ENCODE measurements at regions of chr17 and their contacts with region 1.

Region 1: DNA sequence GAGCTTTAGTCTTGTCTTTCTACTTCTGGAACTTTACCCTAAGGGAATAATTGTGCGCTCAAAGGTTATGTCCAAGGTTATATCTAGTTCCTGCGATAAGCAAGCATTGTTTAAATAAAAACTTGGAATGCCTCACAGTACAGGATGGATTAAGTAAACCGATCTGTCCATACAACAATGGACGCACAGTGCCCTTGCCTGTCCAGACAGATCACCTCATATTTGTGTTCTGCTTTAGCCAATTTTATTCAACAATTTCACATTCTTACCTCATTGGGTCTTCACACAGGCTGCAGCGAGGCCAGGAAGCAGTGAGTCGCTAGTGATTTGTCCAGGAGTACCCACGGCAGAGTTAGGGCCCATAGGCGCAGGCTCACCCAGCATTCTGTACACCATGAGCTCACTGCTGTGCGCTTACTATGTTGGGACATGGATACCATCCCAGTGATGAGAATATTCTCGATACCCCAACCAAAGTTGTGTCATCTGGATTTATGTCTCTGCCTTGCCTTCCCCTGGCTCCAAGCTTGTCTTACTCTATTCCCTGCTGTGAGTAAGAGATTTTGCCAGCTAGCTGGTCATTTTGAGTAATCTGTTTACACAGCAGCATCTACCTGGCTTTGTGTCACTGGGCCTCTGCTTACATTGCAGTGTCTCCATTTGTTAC is 39.8 kb downstream of the USP43 start:
- DNase-seq: peak; percentile 89
- H3K4me3 ChIP-seq: no peak overlapping the region
- H3K27ac ChIP-seq: peak overlapping the region; percentile 78
- H3K4me1 ChIP-seq: peaks cover 15% of the 10 kb centered on the region
- H3K27me3 ChIP-seq: no peaks in the 10 kb centered on the region
- CTCF ChIP-seq: no peak

Region 2: GRCh38 chr17:8708025-8708461 is 977.0 kb before region 1 on chr17:
- CTCF ChIA-PET with region 1: no interaction called
- dilution Hi-C with region 1: no loop called
- in situ Hi-C with region 1: no loop called
- intact Hi-C with region 1: no loop called
- DNase-seq: no peak
- H3K4me3 ChIP-seq: no peak overlapping the region
- H3K27ac ChIP-seq: no peak overlapping the region
- H3K4me1 ChIP-seq: no peaks in the 10 kb centered on the region
- H3K27me3 ChIP-seq: no peaks in the 10 kb centered on the region
- CTCF ChIP-seq: no peak

Region 3: DNA sequence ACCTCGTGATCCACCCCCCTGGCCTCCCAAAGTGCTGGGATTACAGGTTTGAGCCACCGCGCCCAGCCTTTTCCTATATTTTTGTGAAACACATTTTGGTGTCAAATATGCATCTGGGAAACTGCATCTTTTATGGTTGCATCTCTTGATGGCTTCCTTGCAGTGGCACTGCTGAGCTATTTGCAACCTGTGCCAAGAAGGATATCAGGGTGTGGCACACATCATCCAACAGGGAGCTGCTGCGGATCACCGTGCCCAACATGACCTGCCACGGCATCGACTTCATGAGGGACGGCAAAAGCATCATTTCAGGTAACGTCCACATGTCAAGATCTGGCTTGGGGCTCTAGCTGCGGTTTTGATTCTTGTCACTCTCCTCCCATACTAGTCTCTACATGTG is 56.6 kb before region 1 on chr17:
- CTCF ChIA-PET with region 1: no interaction called
- dilution Hi-C with region 1: no loop called
- in situ Hi-C with region 1: no loop called
- intact Hi-C with region 1: loop called (anchors 10 kb)
- DNase-seq: peak; percentile 47
- H3K4me3 ChIP-seq: no peak overlapping the region
- H3K27ac ChIP-seq: no peak overlapping the region
- H3K4me1 ChIP-seq: no peaks in the 10 kb centered on the region
- H3K27me3 ChIP-seq: no peaks in the 10 kb centered on the region
- CTCF ChIP-seq: peak in 1 of 2 donors; percentile 50

Region 4: DNA sequence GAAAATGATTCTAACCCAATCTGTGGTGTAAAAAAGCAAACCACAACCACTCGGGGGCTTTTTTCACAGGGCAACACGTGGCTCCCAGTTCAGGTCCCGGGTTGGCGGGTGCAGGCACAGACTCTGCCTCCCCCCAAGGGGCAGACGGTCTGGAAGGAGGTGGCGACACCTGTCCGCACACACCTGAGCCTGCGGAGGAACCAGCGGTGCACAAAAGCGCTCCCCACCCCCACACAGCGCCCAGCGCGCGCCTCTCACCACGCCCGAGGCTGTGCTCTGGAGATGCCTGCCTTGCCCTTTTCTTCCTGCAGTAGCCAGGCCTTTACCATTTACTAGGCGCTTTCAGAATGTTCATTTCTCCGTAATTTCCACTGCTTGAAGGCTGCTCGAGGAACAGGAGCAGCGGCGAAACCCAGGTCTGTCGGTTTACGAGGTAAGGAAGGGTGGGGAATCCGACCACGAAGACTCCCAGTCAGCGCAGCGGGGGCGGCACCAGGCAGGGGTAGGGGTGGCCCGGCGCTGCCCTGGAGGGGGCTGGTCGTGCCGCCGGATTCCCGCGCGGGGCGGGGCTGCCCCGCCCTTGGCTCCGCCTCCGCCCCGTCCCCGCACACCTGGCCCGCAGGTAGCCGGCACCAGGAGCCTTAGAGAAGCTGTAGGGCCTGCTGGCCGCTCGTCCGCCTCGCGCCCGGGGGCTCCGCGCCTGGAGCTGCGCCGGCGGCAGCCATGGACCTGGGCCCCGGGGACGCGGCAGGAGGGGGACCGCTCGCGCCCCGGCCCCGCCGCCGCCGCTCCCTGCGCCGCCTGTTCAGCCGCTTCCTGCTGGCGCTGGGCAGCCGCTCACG is 40.0 kb before region 1 on chr17 and contains the start of gene USP43:
- CTCF ChIA-PET with region 1: no interaction called
- dilution Hi-C with region 1: loop called (anchors 5 kb)
- in situ Hi-C with region 1: no loop called
- intact Hi-C with region 1: loop called (anchors 2 kb)
- DNase-seq: peak; percentile 81
- H3K4me3 ChIP-seq: peak within 1 kb of the TSS; percentile 63 to 79 (median 69)
- H3K27ac ChIP-seq: peak within 1 kb of the TSS; percentile 88
- H3K4me1 ChIP-seq: peaks cover 25% of the 10 kb centered on the region
- H3K27me3 ChIP-seq: no peaks in the 10 kb centered on the region
- CTCF ChIP-seq: peak in 1 of 2 donors; percentile 13
- total RNA-seq, gene USP43: 8.0 to 9.3 TPM

Region 5: GRCh38 chr17:9702914-9703780 is 18.1 kb after region 1 on chr17:
- CTCF ChIA-PET with region 1: interaction called, 10 read pairs
- dilution Hi-C with region 1: no loop called
- in situ Hi-C with region 1: no loop called
- intact Hi-C with region 1: no loop called
- DNase-seq: no peak
- H3K4me3 ChIP-seq: no peak overlapping the region
- H3K27ac ChIP-seq: no peak overlapping the region
- H3K4me1 ChIP-seq: no peaks in the 10 kb centered on the region
- H3K27me3 ChIP-seq: no peaks in the 10 kb centered on the region
- CTCF ChIP-seq: no peak

Region 6: DNA sequence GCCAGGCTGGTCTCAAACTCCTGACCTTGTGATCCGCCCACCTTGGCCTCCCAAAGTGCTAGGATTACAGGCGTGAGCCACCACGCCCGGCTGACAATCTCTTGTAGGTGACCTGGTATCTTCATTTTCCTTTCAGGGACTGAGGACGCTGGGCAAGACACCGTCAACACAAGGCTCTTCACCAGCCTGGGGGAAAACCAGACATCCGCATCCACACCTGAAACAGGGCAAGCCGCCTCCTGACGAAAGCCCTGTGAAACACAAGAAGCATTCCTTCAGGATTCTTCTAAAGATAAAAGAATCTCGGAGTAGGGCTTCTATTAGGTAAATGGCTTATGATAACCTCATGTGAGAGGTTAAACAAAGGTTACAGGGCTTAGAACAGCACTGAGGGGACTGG is 58.0 kb after region 1 on chr17:
- CTCF ChIA-PET with region 1: no interaction called
- dilution Hi-C with region 1: loop called (anchors 5 kb)
- in situ Hi-C with region 1: no loop called
- intact Hi-C with region 1: no loop called
- DNase-seq: no peak
- H3K4me3 ChIP-seq: no peak overlapping the region
- H3K27ac ChIP-seq: no peak overlapping the region
- H3K4me1 ChIP-seq: no peaks in the 10 kb centered on the region
- H3K27me3 ChIP-seq: no peaks in the 10 kb centered on the region
- CTCF ChIP-seq: no peak

Region 7: DNA sequence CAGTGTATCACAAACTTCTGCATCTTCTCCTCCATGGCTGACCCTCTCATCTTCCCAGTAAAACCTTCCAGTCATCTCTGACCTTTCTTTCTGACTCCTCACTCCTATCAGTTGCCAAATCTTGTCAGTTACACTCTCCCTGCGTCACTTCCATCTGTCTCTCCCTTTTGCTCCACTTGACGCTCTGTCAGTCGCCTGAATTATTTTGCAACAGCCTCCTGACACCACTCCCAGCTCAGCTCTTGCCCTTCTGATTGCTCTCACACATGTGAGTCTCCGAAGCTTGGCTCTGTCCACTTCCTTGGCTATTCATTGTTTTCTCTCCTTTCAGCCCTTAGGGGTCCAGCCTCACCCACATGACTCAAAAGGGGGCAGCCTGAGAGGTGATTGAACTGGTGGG is 78.6 kb after region 1 on chr17:
- CTCF ChIA-PET with region 1: no interaction called
- dilution Hi-C with region 1: no loop called
- in situ Hi-C with region 1: no loop called
- intact Hi-C with region 1: no loop called
- DNase-seq: no peak
- H3K4me3 ChIP-seq: no peak overlapping the region
- H3K27ac ChIP-seq: no peak overlapping the region
- H3K4me1 ChIP-seq: no peaks in the 10 kb centered on the region
- H3K27me3 ChIP-seq: no peaks in the 10 kb centered on the region
- CTCF ChIP-seq: no peak

Measured in mammary epithelial cell (primary cell).